ENCODE measurements at regions of chr19 and their contacts with region 1.

Region 1: GRCh38 chr19:43668406-43669158 is 1.4 kb downstream of the PLAUR start:
- DNase-seq: peak; percentile 95
- ATAC-seq: peak; percentile 93
- H3K4me3 ChIP-seq: peak overlapping the region; percentile 84
- H3K27ac ChIP-seq: peak overlapping the region; percentile 51
- H3K4me1 ChIP-seq: peaks cover 14% of the 10 kb centered on the region
- H3K27me3 ChIP-seq: no peaks in the 10 kb centered on the region
- CTCF ChIP-seq: no peak
- EP300 ChIP-seq: no peak
- POLR2A ChIP-seq: no peak; the same call in 1 of the 2 replicates
- RAD21 ChIP-seq: no peak

Region 2: DNA sequence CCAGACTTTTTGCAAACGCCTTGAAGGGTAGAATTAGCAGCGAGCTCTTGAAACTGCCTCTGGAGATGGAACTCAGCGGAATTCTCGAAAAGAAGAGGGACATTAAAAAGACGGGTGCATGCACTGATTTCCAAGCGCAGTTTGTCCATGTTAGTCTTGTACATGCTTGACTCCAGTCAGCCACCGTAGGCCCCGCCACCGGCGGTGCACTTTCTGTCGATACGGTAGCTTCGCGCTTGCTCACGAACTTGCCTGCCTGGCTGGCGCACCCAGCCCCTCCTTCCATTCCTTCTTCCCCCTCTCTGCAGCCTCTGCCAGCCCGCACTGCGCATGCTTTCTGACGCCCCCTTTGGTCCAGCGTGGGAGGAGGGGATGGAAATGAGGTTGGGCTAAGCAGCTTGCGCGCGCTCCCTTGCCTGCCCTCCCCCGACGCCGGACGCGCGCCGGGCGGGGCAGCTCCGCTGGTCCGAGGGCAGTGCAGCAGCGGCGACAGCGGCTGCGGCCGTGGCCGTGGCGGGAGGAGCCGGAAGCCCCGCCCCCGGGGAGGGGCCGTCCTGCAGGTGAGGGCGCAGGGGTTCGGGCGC is 135.5 kb before region 1 on chr19 and contains the start of gene ZNF575:
- CTCF ChIA-PET with region 1: interaction called, 3 read pairs
- POLR2A ChIA-PET with region 1: interaction called, 4 read pairs
- RAD21 ChIA-PET with region 1: interaction called, 14 read pairs
- SMC1A ChIA-PET with region 1: no interaction called
- in situ Hi-C with region 1: no loop called
- intact Hi-C with region 1: no loop called
- DNase-seq: peak; percentile 91
- ATAC-seq: peak; percentile 88
- H3K4me3 ChIP-seq: peak within 1 kb of the TSS; percentile 74
- H3K27ac ChIP-seq: peak within 1 kb of the TSS; percentile 37
- H3K4me1 ChIP-seq: peaks cover 8% of the 10 kb centered on the region; the same call in 1 of the 2 replicates
- H3K27me3 ChIP-seq: no peaks in the 10 kb centered on the region
- CTCF ChIP-seq: no peak
- EP300 ChIP-seq: no peak
- POLR2A ChIP-seq: peak; percentile 68
- RAD21 ChIP-seq: no peak
- polyA plus RNA-seq, gene ZNF575: 0.23 to 0.35 TPM

Region 3: DNA sequence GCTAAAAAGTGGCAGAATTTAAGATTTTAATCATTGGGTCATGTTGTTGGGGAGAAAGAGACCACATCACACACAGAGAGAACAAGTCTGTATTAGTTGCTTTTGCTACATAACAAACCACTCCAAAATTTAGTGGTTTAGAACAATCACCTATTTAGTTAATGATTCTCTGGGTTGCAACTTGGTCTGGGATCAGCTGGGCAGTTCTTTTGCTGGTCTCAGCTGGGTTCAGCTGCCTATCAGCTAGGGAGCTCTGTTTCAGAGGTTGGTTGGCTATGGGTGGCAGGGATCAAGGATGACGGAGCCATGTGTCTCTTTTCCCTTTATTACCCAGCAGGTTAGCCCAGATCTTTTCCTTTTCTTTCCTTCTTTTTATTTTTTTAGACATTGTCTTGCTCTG is 84.1 kb before region 1 on chr19:
- CTCF ChIA-PET with region 1: no interaction called
- POLR2A ChIA-PET with region 1: no interaction called
- RAD21 ChIA-PET with region 1: no interaction called
- SMC1A ChIA-PET with region 1: no interaction called
- in situ Hi-C with region 1: no loop called
- intact Hi-C with region 1: no loop called
- DNase-seq: no peak
- ATAC-seq: peak; percentile 75
- H3K4me3 ChIP-seq: no peak overlapping the region
- H3K27ac ChIP-seq: no peak overlapping the region
- H3K4me1 ChIP-seq: peaks cover 5% of the 10 kb centered on the region
- H3K27me3 ChIP-seq: no peaks in the 10 kb centered on the region
- CTCF ChIP-seq: no peak
- EP300 ChIP-seq: no peak
- POLR2A ChIP-seq: no peak
- RAD21 ChIP-seq: no peak

Region 4: GRCh38 chr19:43678512-43679261 is 10.1 kb after region 1 on chr19:
- CTCF ChIA-PET with region 1: interaction called, 19 read pairs
- POLR2A ChIA-PET with region 1: interaction called, 5 read pairs
- RAD21 ChIA-PET with region 1: interaction called, 3 read pairs
- SMC1A ChIA-PET with region 1: interaction called, 6 read pairs
- in situ Hi-C with region 1: no loop called
- intact Hi-C with region 1: no loop called
- DNase-seq: no peak
- ATAC-seq: 0 out of 3 replicates have a peak, but pooled peaks have one; percentile 17
- H3K4me3 ChIP-seq: no peak overlapping the region
- H3K27ac ChIP-seq: no peak overlapping the region
- H3K4me1 ChIP-seq: peaks cover 15% of the 10 kb centered on the region
- H3K27me3 ChIP-seq: no peaks in the 10 kb centered on the region
- CTCF ChIP-seq: no peak
- EP300 ChIP-seq: no peak
- POLR2A ChIP-seq: no peak
- RAD21 ChIP-seq: no peak

Region 5: GRCh38 chr19:43743022-43743421 is 74.4 kb after region 1 on chr19:
- CTCF ChIA-PET with region 1: interaction called, 45 read pairs
- POLR2A ChIA-PET with region 1: interaction called, 5 read pairs
- RAD21 ChIA-PET with region 1: interaction called, 46 read pairs
- SMC1A ChIA-PET with region 1: interaction called, 17 read pairs
- in situ Hi-C with region 1: no loop called
- intact Hi-C with region 1: loop called (anchors 5 kb)
- DNase-seq: no peak
- ATAC-seq: no peak
- H3K4me3 ChIP-seq: no peak overlapping the region
- H3K27ac ChIP-seq: no peak overlapping the region
- H3K4me1 ChIP-seq: peaks cover 19% of the 10 kb centered on the region
- H3K27me3 ChIP-seq: no peaks in the 10 kb centered on the region
- CTCF ChIP-seq: no peak
- EP300 ChIP-seq: no peak
- POLR2A ChIP-seq: no peak
- RAD21 ChIP-seq: no peak

Region 6: DNA sequence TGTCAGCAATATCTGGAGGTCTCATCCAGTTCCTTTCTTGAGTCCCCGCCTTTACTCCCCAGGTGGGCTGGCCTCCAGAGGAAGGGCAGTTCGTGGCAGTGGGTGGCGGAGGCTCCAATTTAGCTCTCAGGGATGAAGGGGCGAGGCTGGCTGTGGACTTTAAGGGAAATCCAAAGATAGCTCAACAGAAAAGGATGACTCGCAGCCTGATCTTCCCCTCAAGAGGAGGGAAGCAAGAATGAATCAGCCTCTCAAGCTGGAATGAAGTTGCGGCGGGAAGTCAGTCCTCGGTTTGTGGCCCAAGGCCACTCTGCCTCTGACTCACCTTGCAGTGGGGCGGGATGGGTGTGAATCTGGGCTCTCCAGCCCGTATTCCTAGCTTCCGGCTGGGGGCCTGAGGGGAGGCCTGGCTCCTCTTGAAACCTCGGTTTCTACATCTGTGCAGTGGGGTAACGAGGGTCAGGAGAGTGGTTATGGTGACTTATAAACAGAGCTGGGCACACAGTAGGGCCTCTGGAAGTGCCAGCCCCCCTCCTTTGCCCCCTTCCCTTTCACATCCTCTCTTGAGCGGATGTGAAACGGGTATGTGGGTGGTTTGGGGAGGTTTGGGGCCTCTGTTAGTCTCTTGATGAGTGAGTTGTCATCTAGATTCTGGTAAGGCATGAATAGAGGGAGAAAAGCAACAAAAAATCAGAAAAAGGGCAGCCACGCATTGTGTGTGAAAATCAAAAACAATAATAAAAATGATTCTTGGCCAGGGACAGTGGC is 96.7 kb after region 1 on chr19:
- CTCF ChIA-PET with region 1: interaction called, 19 read pairs
- POLR2A ChIA-PET with region 1: interaction called, 12 read pairs
- RAD21 ChIA-PET with region 1: interaction called, 55 read pairs
- SMC1A ChIA-PET with region 1: interaction called, 5 read pairs
- in situ Hi-C with region 1: no loop called
- intact Hi-C with region 1: no loop called
- DNase-seq: peak; percentile 95
- ATAC-seq: peak; percentile 81
- H3K4me3 ChIP-seq: peak overlapping the region; percentile 14; the same call in 1 of the 2 replicates
- H3K27ac ChIP-seq: peak overlapping the region; percentile 100
- H3K4me1 ChIP-seq: peaks cover 57% of the 10 kb centered on the region
- H3K27me3 ChIP-seq: no peaks in the 10 kb centered on the region
- CTCF ChIP-seq: no peak
- EP300 ChIP-seq: peak; percentile 96 to 99
- POLR2A ChIP-seq: peak; percentile 62
- RAD21 ChIP-seq: no peak

Region 7: DNA sequence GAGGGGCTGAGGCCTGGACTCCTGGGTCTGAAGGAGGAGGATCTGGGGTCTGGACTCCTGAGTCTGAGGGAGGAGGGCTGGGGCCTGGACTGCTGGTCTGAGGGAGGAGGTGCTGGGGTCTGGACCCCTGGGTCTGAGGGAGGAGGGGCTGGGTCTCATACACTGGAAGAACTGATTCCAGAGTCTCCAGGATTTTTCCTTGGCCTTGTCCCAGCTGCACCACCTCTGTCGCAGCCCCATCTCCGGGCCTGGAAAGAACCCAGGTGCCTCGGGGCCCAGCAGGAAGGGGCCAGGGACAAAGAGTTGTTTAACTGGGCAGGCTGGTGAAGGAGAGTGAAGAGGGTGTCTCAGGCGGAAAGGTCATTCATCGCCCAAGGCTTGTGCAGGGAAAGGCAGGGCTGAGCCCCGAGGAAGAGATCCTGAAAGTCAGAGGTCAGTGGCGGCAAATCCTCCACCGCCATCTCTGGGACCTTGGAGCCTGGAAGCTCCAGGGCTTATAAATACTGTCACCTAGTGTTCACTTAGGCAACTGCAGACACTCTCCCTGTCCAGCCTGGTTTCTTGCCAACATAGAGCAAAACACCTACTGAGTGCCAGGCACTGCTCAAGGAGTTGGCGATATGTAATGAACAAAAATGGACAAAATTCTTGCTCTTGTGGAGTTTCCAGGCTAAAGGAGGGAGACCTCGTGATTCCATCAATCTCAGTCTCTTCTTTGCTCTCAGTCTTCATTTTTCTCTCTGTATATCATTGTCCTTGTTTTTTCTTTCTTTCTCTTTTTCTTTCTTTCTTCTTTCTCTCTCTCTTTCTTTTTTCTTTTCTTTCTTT is 116.6 kb after region 1 on chr19:
- CTCF ChIA-PET with region 1: interaction called, 48 read pairs
- POLR2A ChIA-PET with region 1: interaction called, 13 read pairs
- RAD21 ChIA-PET with region 1: interaction called, 86 read pairs
- SMC1A ChIA-PET with region 1: interaction called, 43 read pairs
- in situ Hi-C with region 1: no loop called
- intact Hi-C with region 1: no loop called
- DNase-seq: no peak
- ATAC-seq: peak; percentile 70
- H3K4me3 ChIP-seq: no peak overlapping the region
- H3K27ac ChIP-seq: peak overlapping the region; percentile 74
- H3K4me1 ChIP-seq: peaks cover 49% of the 10 kb centered on the region
- H3K27me3 ChIP-seq: no peaks in the 10 kb centered on the region
- CTCF ChIP-seq: peak; percentile 98 to 100 (median 100); a peak in 5 of 6 replicates
- EP300 ChIP-seq: no peak
- POLR2A ChIP-seq: no peak
- RAD21 ChIP-seq: peak; percentile 95

Region 8: DNA sequence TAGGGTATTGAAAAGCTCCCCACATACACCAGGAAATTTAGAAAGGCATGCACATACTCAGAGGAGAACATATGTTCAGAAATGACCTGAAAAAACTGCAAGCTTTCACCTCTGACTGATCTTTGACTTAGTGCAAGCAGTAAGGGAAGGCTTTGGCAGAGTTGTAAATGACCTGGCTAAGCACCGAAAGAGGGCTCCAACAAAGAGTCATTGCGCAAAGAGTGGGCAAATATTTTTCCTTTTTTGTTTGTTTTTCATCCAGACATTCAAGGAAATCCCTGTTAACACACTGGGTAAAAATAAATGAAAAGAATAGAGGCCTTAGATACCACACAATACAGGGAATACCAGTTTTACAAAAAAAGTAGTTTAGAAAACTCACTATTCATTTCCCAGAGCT is 585.9 kb after region 1 on chr19:
- CTCF ChIA-PET with region 1: no interaction called
- POLR2A ChIA-PET with region 1: no interaction called
- RAD21 ChIA-PET with region 1: no interaction called
- SMC1A ChIA-PET with region 1: no interaction called
- in situ Hi-C with region 1: no loop called
- intact Hi-C with region 1: no loop called
- DNase-seq: no peak
- ATAC-seq: no peak
- H3K4me3 ChIP-seq: no peak overlapping the region
- H3K27ac ChIP-seq: no peak overlapping the region
- H3K4me1 ChIP-seq: no peaks in the 10 kb centered on the region
- H3K27me3 ChIP-seq: no peaks in the 10 kb centered on the region
- CTCF ChIP-seq: no peak
- EP300 ChIP-seq: no peak
- POLR2A ChIP-seq: no peak
- RAD21 ChIP-seq: no peak

Measured in GM12878 (cell line).